Breast epithelium (tissue), 4 donors: ENCODE measurements at regions of chr2 and their contacts with region 1.

Region 1: GRCh38 chr2:119704670-119705120 is 25.7 kb downstream of the TMEM177 start:
- DNase-seq: no peak
- H3K4me3 ChIP-seq: no peak overlapping the region
- H3K27ac ChIP-seq: peak overlapping the region in 1 of 2 donors; percentile 35
- H3K4me1 ChIP-seq: peaks cover 0 to 13% of the 10 kb centered on the region in 2 donors
- H3K27me3 ChIP-seq: no peaks in the 10 kb centered on the region
- CTCF ChIP-seq: no peak
- POLR2A ChIP-seq: no peak

Region 2: DNA sequence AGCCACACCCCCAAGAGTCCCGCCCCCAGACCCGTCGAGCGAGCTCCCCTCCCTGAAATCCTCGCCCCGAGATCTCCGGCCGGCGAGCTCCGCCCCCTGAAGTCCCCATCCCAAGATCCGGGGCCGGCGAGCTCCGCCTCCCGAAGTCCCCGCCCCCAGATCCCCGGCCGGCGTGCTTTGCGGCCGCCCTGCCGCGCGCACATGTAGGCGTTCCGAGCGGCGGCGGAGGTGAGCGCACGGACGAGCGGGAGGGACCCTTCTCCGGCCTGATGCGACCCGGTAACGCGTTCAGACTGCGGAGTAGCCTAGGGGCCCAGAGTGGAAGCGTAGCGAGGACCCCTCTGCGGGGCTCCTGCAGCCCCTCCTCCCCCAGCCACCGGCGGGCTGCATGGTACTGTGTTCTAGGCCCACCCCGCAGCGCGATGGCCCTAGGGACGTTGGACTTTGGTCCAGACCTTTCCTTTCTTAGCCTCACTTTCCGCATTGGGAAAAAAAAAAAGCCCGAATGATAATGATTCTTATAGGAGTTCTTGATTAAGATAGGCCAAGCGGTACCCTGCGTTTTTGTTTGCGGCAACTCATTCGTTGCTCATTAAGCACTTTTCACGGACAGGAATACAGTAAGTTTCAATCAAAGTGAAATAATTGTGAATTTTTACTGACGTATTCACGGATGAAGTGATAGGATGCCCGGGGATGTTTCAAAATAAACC is 25.5 kb before region 1 on chr2 and contains the start of gene TMEM177:
- intact Hi-C with region 1: no loop called
- DNase-seq: peak; percentile 80 to 88
- H3K4me3 ChIP-seq: peak within 1 kb of the TSS; percentile 80 to 97 (median 91)
- H3K27ac ChIP-seq: peak within 1 kb of the TSS; percentile 66 to 79
- H3K4me1 ChIP-seq: peaks cover 0 to 6% of the 10 kb centered on the region in 2 donors
- H3K27me3 ChIP-seq: no peaks in the 10 kb centered on the region
- CTCF ChIP-seq: no peak
- POLR2A ChIP-seq: no peak
- total RNA-seq, gene TMEM177: 3.4 to 16.5 (median 13.1) TPM

Region 3: GRCh38 chr2:120206022-120206581 is 501.4 kb after region 1 on chr2:
- intact Hi-C with region 1: no loop called
- DNase-seq: no peak
- H3K4me3 ChIP-seq: no peak overlapping the region
- H3K27ac ChIP-seq: no peak overlapping the region
- H3K4me1 ChIP-seq: no peaks in the 10 kb centered on the region
- H3K27me3 ChIP-seq: no peaks in the 10 kb centered on the region
- CTCF ChIP-seq: no peak
- POLR2A ChIP-seq: no peak

Region 4: GRCh38 chr2:120797421-120798221 is 1092.9 kb after region 1 on chr2:
- intact Hi-C with region 1: loop called (anchors 5 kb)
- DNase-seq: no peak
- H3K4me3 ChIP-seq: no peak overlapping the region
- H3K27ac ChIP-seq: no peak overlapping the region
- H3K4me1 ChIP-seq: no peaks in the 10 kb centered on the region
- H3K27me3 ChIP-seq: no peaks in the 10 kb centered on the region
- CTCF ChIP-seq: no peak
- POLR2A ChIP-seq: no peak